Activated T-helper 1 cell treated with anti-CD3 and anti-CD28 coated beads, Interleukin-12 subunit alpha, Interleukin-12 subunit beta, Interleukin-2, Interleukin-4 antibody, amounts not matched to agents 30 ng/mL and 10 ng/mL and 1 ng/mL, durations not matched to agents 14 hours and 24 hours and 36 hours (primary cell): ENCODE measurements at regions of chr3 and their contacts with region 1.

Region 1: GRCh38 chr3:126475413-126476114 is at the start of gene ZXDC:
- DNase-seq: peak; percentile 92
- H3K4me3 Mint-ChIP-seq: peak within 1 kb of the TSS; percentile 93
- H3K27ac Mint-ChIP-seq: peak within 1 kb of the TSS; percentile 88
- H3K4me1 Mint-ChIP-seq: peaks cover 28% of the 10 kb centered on the region
- H3K27me3 Mint-ChIP-seq: peaks cover under 1% of the 10 kb centered on the region
- total RNA-seq, gene ZXDC: 29.2 and 29.4 TPM in 2 replicates

Region 2: DNA sequence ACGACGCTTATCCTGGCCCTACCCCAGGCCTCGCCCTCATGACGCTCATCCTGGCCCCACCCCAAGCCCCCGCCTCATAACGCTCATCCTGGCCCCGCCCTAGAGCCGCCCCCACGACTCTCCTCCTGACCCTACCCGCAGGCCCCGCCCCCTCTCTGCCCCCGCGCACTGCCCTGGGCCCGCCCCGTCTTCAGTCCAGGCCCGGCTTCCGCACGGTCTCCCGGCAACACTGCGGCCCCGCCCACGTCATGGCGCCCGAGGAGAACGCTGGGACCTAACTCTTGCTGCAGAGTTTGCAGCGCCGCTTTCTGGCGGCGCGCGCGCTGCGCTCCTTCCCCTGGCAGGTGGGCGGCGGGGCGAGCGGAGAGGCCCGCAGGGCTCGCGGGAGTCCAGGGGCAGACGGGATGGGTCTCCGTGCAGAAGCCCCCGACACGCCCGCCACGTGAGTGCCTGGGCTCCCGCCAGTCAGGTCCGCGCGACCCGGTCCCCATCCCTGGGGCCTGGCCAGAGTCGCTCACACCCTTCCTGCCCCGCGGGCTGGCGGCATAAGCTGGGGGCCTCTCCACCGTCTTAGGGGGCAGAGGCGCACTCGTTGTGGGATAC is 559.1 kb before region 1 on chr3:
- intact Hi-C with region 1: loop called (anchors 1 kb)
- DNase-seq: peak; percentile 93
- H3K4me3 Mint-ChIP-seq: peak overlapping the region; percentile 86
- H3K27ac Mint-ChIP-seq: peak overlapping the region; percentile 83
- H3K4me1 Mint-ChIP-seq: peaks cover 24% of the 10 kb centered on the region
- H3K27me3 Mint-ChIP-seq: peaks cover 4% of the 10 kb centered on the region

Region 3: DNA sequence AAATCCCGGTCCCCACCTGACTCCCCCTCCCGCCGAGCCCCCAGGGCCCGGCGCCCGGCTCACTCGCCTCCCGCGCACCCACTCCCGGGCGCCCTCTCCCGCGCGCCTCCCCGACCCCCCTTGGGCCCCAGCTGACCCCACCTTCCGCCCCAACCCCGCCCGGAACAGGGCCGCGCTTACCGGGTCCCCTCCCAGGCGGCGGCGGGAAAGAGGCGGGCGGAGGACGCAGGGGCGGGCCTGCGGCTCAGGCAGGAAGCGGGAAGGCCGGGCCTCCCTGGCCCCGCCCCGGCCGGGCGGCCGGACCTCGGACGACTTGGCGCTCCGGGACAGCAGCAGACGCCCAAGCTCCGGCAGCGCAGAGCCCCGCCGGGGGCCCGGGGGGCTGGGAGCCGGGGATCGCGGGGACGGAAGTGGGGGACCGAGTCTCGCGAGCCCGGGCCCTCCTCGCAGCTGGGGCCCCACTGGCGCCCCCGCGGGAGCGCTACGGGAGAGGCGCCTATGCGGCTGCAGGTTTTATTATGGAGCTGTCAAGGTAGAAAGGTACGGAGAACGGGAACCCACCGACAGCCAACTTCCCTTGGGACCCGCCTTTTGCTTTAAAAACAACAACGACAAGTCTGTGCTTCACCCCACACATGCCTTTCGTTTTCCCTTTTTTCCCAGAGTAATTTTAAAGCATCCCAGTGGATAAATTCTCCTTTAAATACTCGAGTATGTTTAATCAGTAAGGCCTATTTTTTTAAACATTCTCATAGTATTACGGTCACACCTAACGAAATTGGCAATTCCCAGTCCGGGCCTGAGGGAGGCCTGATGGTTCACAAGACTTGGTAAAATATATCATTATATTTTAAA is 391.4 kb before region 1 on chr3 and contains the start of gene SLC41A3:
- intact Hi-C with region 1: loop called (anchors 2 kb)
- DNase-seq: peak; percentile 90
- H3K4me3 Mint-ChIP-seq: peak within 1 kb of the TSS; percentile 93
- H3K27ac Mint-ChIP-seq: peak within 1 kb of the TSS; percentile 89
- H3K4me1 Mint-ChIP-seq: peaks cover 26% of the 10 kb centered on the region
- H3K27me3 Mint-ChIP-seq: no peaks in the 10 kb centered on the region
- total RNA-seq, gene SLC41A3: 17.3 and 23.4 TPM in 2 replicates

Region 4: DNA sequence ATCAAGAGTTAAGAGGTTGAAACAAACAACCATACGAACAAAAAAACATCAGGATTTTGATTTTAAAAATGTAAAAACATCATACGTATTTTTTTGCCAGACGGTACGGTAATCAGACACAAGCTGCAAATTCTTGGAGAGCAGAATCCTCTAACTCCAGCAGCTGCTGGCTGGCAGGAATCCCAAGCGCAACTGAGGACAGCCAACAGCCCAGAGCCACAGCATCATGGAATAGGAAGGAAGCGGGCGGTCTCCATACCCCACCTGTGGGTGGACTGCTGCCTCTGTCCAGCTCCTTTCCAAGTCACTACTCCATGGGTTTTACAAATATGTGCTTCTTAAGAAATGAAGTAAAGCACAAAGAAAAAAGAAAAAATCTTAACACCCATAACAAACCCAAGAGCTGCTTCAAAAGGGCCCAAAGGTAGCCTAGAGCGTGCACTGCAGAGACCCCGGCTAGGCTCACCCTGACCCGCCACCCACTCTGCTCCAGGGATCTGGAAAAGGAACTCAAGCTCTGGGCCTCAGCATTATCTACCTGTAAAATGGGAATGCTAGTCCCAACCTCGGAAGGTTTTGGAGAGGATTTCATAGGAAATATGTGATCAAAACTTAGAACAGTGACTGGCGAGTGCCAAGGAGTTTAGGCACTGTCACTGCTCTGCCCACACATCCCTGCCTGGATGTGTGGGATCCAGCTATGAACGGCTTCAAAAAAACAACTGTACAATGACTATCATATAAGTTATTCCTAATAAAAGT is 33.3 kb before region 1 on chr3:
- intact Hi-C with region 1: no loop called
- DNase-seq: no peak
- H3K4me3 Mint-ChIP-seq: no peak overlapping the region
- H3K27ac Mint-ChIP-seq: no peak overlapping the region
- H3K4me1 Mint-ChIP-seq: no peaks in the 10 kb centered on the region
- H3K27me3 Mint-ChIP-seq: no peaks in the 10 kb centered on the region

Region 5: DNA sequence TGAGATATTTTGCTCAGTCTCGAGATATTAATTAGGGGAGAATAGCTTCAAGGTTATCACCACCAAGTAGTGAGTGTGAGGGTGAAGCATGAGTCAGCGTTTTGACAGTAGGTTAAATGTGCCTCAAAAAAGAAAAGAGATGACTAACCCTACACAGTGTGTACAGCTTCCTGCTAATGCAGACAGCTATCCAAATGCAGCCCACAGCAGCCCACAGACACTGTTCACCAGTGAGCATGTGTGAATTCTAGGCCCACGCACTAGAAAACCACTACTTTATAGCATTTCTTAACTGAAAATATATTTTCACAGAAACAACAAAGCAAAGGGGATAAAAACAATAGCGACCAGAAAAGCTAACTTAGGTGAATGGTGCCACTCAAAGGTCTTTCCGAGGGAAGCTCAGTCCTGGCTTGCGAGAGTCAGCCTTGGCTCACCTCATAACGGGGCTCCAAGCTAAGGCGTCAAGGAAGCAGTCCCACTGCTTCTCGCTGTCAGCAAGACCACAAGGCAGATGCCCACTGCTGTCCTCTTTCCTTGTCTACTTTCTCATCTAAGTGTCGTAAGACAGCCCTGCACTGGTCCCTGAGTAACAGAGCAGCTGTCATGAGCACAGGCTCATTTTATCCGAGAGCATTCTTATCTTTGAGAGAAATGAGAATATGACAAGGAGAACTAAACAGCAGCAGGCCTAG is 131.8 kb after region 1 on chr3:
- intact Hi-C with region 1: loop called (anchors 5 kb)
- DNase-seq: peak; percentile 6
- H3K4me3 Mint-ChIP-seq: no peak overlapping the region
- H3K27ac Mint-ChIP-seq: no peak overlapping the region
- H3K4me1 Mint-ChIP-seq: peaks cover 10% of the 10 kb centered on the region
- H3K27me3 Mint-ChIP-seq: peaks cover 2% of the 10 kb centered on the region

Region 6: DNA sequence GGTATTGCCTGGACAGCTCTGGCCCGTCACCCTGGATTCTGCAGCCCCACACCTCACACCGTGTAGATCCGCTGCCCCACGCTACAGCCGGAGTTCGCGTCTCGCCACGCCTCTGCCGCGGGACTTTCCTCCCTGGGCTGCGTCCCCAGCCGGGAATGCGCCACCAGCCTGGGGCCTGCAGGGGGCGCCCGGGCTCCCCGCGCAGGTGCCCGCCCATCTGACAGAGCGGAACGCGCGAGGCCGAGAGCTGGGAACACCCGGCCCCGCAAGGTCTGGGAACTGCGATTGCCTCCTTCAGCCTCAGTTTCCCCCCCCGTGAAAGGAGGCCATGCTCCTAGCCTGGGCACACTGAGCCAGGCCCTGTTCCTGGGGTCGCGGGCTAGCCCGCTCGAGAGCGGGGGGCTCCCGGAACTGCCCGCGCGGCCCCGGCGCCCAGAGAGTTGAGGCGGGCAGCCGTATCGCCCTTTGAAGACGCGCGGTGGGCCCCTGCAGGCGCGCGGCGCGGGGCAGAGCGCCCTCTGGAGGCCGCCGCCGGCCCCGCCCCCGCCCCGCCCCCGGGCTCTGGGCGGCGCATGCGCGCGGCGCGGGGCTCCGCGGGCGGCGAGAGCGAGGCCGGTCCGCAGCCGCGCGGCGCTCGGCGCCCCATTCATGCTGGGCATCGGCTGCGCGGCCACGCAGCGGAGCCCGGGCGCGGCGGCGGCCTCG is 507.1 kb after region 1 on chr3 and contains the start of gene PLXNA1:
- intact Hi-C with region 1: loop called (anchors 1 kb)
- DNase-seq: peak; percentile 87
- H3K4me3 Mint-ChIP-seq: peak within 1 kb of the TSS; percentile 81
- H3K27ac Mint-ChIP-seq: peak within 1 kb of the TSS; percentile 90
- H3K4me1 Mint-ChIP-seq: peaks cover 23% of the 10 kb centered on the region
- H3K27me3 Mint-ChIP-seq: peaks cover 4% of the 10 kb centered on the region
- total RNA-seq, gene PLXNA1: 22.1 and 25.5 TPM in 2 replicates

Region 7: DNA sequence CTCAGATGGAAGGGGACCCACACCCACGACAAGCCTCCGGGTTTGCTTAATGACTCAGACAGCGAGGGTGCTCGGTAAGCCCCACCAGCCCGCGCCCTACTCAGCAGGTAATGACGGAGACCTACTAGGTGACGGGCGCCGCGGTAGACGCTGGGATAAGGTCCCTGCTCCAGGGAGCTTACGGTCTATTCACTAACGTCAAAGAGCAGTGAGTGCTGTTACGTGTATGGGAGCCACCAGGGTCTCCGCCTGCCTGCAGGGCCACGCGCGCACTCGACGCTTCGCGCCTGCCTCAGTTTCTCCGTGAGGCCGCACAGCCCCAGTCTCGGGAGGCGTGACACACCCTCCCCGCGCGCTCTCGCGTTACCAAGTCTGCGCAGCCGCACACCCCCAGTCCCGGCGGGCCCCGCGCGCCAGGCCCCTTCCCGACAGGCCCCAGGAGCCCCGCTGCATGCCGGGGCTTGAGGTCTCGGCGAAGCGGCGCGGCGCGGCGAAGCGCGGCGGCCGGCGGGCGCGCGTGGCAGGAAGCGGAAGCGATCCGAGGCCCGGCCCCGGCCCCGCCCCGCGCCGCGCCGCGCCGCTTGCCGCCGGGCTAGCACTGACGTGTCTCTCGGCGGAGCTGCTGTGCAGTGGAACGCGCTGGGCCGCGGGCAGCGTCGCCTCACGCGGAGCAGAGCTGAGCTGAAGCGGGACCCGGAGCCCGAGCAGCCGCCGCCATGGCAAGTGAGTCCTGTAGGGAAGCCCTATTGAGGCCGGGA is 1576.5 kb after region 1 on chr3 and contains the start of gene SEC61A1:
- intact Hi-C with region 1: loop called (anchors 10 kb)
- DNase-seq: peak; percentile 96
- H3K4me3 Mint-ChIP-seq: peak within 1 kb of the TSS; percentile 99
- H3K27ac Mint-ChIP-seq: peak within 1 kb of the TSS; percentile 96
- H3K4me1 Mint-ChIP-seq: peaks cover 43% of the 10 kb centered on the region
- H3K27me3 Mint-ChIP-seq: peaks cover 6% of the 10 kb centered on the region
- total RNA-seq, gene SEC61A1: 205 and 214 TPM in 2 replicates